ENCODE measurements at regions of chr7 and their contacts with region 1.

Region 1: DNA sequence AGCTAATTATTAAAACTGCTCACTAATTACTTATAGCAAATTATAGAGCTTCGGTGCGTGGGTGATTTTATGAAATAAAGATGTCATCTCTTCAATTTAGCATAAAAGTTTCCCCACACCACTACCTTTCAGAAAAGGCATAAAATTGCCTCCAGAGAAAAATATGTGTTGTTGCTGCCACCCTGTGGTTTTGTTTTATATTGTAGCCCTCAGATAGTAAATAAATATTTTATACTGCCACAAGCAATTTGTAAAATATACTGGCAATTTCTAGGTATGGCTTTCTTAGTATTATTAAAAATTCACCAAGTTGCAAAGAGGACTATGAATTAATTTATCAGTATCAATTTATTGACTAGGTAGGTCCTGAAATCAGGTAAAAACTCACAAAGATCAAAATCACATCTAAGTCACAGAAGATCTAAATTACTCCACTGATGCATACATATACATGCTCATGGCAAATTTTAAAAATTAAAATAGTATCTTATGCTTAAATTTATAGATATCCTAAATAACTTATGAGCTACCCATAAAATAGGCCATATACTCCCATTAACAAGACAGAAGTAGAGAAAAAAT is 26.5 kb downstream of the ASNS start:
- DNase-seq: no peak
- H3K4me3 ChIP-seq: no peak overlapping the region
- H3K27ac ChIP-seq: no peak overlapping the region
- H3K27me3 ChIP-seq: no peaks in the 10 kb centered on the region
- CTCF ChIP-seq: peak; percentile 52

Region 2: GRCh38 chr7:97104719-97105238 is 740.9 kb before region 1 on chr7:
- CTCF ChIA-PET with region 1: interaction called, 28 read pairs
- POLR2A ChIA-PET with region 1: no interaction called
- DNase-seq: peak; percentile 32
- H3K4me3 ChIP-seq: no peak overlapping the region
- H3K27ac ChIP-seq: no peak overlapping the region
- H3K27me3 ChIP-seq: peaks cover 3% of the 10 kb centered on the region
- CTCF ChIP-seq: peak; percentile 77

Region 3: GRCh38 chr7:97117372-97118188 is 728.1 kb before region 1 on chr7 and contains the start of gene SDHAF3:
- CTCF ChIA-PET with region 1: interaction called, 23 read pairs
- POLR2A ChIA-PET with region 1: no interaction called
- DNase-seq: peak; percentile 96
- H3K4me3 ChIP-seq: peak within 1 kb of the TSS; percentile 97
- H3K27ac ChIP-seq: peak within 1 kb of the TSS; percentile 72
- H3K27me3 ChIP-seq: no peaks in the 10 kb centered on the region
- CTCF ChIP-seq: 0 out of 2 replicates have a peak, but pooled peaks have one; percentile 12
- polyA plus RNA-seq, gene SDHAF3: 9.2 and 13.7 TPM in 2 replicates

Region 4: DNA sequence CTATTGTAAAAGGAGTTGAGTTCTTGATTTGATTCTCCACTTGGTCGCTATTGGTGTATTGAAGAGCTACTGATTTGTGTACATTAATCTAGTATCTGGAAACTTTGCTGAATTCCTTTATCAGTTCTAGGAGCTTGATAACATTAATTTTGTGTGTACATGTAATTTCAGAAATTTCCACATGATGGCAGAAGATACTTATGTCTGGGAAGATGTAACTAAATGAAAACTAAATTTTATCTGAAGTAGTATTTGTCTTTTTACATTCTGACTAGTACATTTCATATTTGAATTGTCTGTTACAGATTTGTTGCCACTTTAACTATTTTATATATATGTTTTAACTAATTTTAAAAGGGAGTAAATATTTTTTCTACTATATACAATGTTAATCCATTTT is 700.6 kb before region 1 on chr7:
- CTCF ChIA-PET with region 1: interaction called, 10 read pairs
- POLR2A ChIA-PET with region 1: no interaction called
- DNase-seq: no peak
- H3K4me3 ChIP-seq: no peak overlapping the region
- H3K27ac ChIP-seq: no peak overlapping the region
- H3K27me3 ChIP-seq: no peaks in the 10 kb centered on the region
- CTCF ChIP-seq: peak; percentile 59

Region 5: DNA sequence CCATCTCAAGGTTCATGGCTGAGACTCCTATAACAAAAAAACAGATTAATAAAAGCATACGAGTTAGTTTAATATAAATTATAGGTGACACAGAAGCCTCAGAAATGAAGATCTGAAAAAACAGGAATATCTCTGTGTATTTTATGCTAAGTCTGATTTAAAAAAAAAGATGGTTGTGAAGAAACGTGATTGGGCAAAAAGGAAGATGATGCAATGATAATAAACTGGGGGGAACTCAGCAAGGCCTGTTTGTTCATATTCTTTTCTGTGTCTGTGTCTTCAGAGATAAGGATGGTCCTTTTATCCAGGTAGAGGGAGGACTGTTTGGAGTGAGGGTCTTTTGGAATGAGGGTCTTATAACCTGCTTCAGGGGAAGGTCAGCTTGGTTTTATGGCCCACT is 87.9 kb before region 1 on chr7:
- CTCF ChIA-PET with region 1: no interaction called
- POLR2A ChIA-PET with region 1: no interaction called
- DNase-seq: no peak
- H3K4me3 ChIP-seq: no peak overlapping the region
- H3K27ac ChIP-seq: no peak overlapping the region
- H3K27me3 ChIP-seq: no peaks in the 10 kb centered on the region
- CTCF ChIP-seq: no peak

Region 6: DNA sequence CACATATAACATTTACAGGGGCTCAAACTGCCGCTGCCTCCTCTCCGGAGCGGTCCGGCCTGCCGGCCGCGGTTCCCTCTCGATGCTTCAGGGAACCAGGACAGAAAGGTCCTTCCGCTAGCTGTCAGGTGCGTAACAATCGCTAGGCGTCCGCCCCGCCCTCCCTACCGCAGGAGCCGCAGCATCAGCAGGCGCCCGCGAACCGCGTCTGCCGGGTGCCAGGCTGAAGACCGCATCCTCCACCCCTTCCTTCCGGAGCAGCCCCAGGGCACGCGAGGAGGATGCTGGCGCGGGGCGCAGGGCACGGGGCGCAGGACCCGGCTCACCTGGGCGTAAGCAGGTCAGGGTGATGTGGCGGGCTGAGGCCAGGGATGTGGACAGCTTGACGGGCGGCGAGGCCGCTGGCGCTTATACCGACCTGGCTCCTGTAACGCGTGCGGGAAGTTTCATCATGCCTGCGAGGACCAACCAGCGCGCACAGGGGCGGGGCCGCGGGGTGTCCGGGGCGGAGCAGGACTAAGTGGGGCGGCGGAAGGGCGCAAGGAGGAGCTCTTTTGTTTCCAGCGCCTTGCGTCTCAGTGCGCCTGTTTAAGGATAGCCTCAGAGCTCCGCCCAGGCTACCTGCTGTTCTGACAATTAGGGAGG is 26.4 kb after region 1 on chr7 and contains the start of gene ASNS:
- CTCF ChIA-PET with region 1: interaction called, 11 read pairs
- POLR2A ChIA-PET with region 1: no interaction called
- DNase-seq: peak; percentile 71
- H3K4me3 ChIP-seq: peak within 1 kb of the TSS; percentile 96
- H3K27ac ChIP-seq: peak within 1 kb of the TSS; percentile 72
- H3K27me3 ChIP-seq: no peaks in the 10 kb centered on the region
- CTCF ChIP-seq: 0 out of 2 replicates have a peak, but pooled peaks have one; percentile 2
- polyA plus RNA-seq, gene ASNS: 113 and 117 TPM in 2 replicates